HCT116 (cell line): ENCODE measurements at regions of chr10 and their contacts with region 1.

Region 1: DNA sequence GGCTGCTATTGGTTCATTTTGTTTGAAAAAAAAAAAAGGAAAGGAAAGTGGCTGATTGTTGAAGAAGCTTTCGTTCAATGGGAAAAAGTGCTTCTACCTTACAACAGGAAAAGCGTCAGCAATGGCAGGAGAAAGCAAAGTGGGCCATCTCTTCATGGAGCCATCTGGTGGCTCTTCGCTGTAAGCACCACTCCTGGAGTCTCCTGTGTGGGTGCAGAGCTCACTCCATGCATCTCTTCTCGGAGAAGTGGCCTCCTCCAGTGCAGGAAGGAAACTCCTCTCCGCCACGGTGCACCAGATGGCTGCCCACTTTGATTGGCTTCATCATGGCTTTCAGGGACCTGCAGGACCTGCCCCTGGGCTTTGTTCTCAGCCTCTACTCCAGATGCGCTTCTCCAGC is 250.9 kb downstream of the PTEN start:
- DNase-seq: peak; percentile 35
- ATAC-seq: peak; percentile 69
- H3K4me3 ChIP-seq: no peak overlapping the region
- H3K27ac ChIP-seq: no peak overlapping the region
- H3K4me1 ChIP-seq: peaks cover 10 to 17% of the 10 kb centered on the region in 2 experiments
- H3K27me3 ChIP-seq: no peaks in the 10 kb centered on the region
- CTCF ChIP-seq: peak; percentile 61 to 69 (median 63); a peak in 5 of 6 replicates
- POLR2A ChIP-seq: no peak
- RAD21 ChIP-seq: peak; percentile 74

Region 2: DNA sequence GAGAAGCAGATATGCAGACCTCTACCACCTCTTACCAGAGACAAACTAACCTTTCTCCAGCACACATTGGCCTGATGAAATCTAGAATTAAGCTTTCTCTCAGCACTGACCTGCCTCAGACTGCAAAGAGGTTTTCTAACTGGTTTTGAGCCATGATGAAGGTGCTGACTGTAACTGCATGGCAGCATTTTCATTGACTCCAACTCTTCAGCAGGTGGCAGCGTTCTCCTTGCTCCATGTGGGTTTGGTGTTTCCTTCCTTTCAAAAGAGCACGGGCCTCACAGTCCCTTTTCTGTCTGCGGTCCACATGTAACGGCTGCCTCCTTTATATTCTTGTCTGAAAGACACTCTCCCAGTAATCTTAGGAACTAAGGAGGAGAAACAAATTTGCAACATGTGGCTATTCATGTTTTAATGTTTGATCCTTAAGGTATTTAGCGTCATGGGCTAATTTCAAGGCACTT is 263.6 kb before region 1 on chr10:
- CTCF ChIA-PET with region 1: interaction called, 21 read pairs
- POLR2A ChIA-PET with region 1: interaction called, 3 read pairs
- RAD21 ChIA-PET with region 1: interaction called in 1 of 2 experiments, 3 read pairs
- intact Hi-C with region 1: no loop called
- DNase-seq: no peak
- ATAC-seq: peak; percentile 88
- H3K4me3 ChIP-seq: no peak overlapping the region
- H3K27ac ChIP-seq: no peak overlapping the region
- H3K4me1 ChIP-seq: peaks cover 3 to 23% of the 10 kb centered on the region in 2 experiments; a peak in 3 of 4 replicates
- H3K27me3 ChIP-seq: no peaks in the 10 kb centered on the region
- CTCF ChIP-seq: peak; percentile 59 to 70 (median 67); a peak in 5 of 6 replicates
- POLR2A ChIP-seq: no peak
- RAD21 ChIP-seq: peak; percentile 88

Region 3: GRCh38 chr10:88104223-88104622 is 10.1 kb before region 1 on chr10:
- CTCF ChIA-PET with region 1: no interaction called
- POLR2A ChIA-PET with region 1: no interaction called
- RAD21 ChIA-PET with region 1: no interaction called
- intact Hi-C with region 1: no loop called
- DNase-seq: no peak
- ATAC-seq: no peak
- H3K4me3 ChIP-seq: no peak overlapping the region
- H3K27ac ChIP-seq: no peak overlapping the region
- H3K4me1 ChIP-seq: peaks cover 0 to 12% of the 10 kb centered on the region in 2 experiments; a peak in 2 of 4 replicates
- H3K27me3 ChIP-seq: no peaks in the 10 kb centered on the region
- CTCF ChIP-seq: no peak
- POLR2A ChIP-seq: no peak
- RAD21 ChIP-seq: no peak

Region 4: DNA sequence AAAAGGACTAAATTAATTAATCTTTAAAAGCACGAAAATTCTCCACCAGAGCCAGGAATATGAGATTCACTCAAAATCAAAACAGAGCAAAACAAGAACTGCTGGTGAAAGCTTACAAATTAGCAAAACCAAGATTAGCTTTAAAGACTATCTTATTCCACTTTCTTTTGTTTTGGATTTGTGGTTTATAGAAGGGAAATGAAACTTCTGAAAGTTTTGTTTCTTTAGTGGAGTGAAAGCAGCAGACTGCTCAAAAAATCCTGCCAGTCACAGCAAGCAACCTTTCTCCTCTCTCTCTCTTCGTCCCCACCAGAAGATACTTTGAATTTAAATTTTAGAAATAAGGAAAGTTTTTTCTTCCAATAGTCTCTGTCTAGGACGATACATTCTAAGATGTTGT is 830.4 kb after region 1 on chr10:
- CTCF ChIA-PET with region 1: no interaction called
- POLR2A ChIA-PET with region 1: no interaction called
- RAD21 ChIA-PET with region 1: no interaction called
- intact Hi-C with region 1: no loop called
- DNase-seq: no peak
- ATAC-seq: no peak
- H3K4me3 ChIP-seq: no peak overlapping the region
- H3K27ac ChIP-seq: no peak overlapping the region
- H3K4me1 ChIP-seq: no peaks in the 10 kb centered on the region
- H3K27me3 ChIP-seq: no peaks in the 10 kb centered on the region
- CTCF ChIP-seq: no peak
- POLR2A ChIP-seq: no peak
- RAD21 ChIP-seq: no peak